SK-N-SH (cell line): ENCODE measurements at regions of chr2 and their contacts with region 1.

Region 1: DNA sequence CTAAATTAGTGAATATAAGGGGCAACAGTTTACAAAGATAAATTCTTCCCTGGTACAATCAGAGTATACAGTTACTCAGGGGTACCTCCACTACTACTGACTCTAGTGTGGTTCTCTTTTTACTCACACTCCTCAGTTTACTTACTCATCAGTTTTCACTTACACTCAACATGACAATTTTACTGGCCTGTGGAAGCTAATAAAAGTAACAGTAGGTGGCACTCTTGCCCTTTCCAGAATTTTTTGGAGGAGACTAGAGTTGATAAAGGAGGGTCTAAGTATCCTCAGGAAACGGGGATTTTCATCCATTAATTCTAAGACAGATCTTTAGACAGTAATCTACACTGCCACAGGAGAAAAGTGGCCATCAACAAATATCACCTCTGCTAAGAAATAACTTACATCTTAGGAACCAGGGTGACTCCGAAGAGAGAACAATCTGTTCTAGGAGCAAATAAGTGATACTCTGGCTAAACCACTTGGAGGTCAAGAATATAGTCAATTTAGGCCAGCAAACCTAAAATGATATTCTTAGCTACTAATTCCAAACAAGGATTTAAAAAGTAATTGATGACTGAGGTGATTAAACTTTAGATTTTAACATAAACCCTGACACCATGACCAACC is 61.3 kb downstream of the ATL2 start:
- DNase-seq: peak; percentile 67
- H3K4me3 ChIP-seq: no peak overlapping the region; a peak in 1 of 4 replicates
- H3K27ac ChIP-seq: no peak overlapping the region
- H3K4me1 ChIP-seq: no peaks in the 10 kb centered on the region; a peak in 1 of 4 replicates
- H3K27me3 ChIP-seq: no peaks in the 10 kb centered on the region
- CTCF ChIP-seq: peak; percentile 97
- EP300 ChIP-seq: no peak
- RAD21 ChIP-seq: peak; percentile 92

Region 2: DNA sequence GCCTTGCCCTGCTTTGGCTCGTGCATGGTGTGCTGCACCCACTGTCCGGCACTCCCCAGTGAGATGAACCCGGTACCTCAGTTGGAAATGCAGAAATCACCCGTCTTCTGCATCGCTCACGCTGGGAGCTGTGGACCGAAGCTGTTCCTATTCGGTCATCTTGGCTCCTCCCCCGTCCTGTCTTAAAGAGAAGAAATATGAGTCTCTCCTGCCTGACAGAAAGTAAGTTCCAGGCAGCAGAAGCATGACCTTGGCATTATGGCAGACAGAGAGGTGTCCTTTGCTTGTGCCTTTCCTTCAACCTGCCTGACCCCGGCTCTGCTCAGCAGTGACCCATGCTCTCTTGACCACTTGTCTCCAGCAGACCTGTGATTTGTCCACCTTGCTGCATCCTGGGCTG is 177.4 kb before region 1 on chr2:
- CTCF ChIA-PET with region 1: no interaction called
- POLR2A ChIA-PET with region 1: no interaction called
- DNase-seq: no peak
- H3K4me3 ChIP-seq: no peak overlapping the region
- H3K27ac ChIP-seq: no peak overlapping the region
- H3K4me1 ChIP-seq: no peaks in the 10 kb centered on the region
- H3K27me3 ChIP-seq: no peaks in the 10 kb centered on the region
- CTCF ChIP-seq: no peak
- EP300 ChIP-seq: no peak
- RAD21 ChIP-seq: no peak

Region 3: GRCh38 chr2:38245114-38245641 is 70.6 kb before region 1 on chr2:
- CTCF ChIA-PET with region 1: no interaction called
- POLR2A ChIA-PET with region 1: no interaction called
- DNase-seq: no peak
- H3K4me3 ChIP-seq: no peak overlapping the region
- H3K27ac ChIP-seq: peak overlapping the region in 1 of 2 experiments; percentile 56; a peak in 1 of 4 replicates
- H3K4me1 ChIP-seq: peaks cover 0 to 17% of the 10 kb centered on the region in 2 experiments; a peak in 2 of 4 replicates
- H3K27me3 ChIP-seq: no peaks in the 10 kb centered on the region
- CTCF ChIP-seq: no peak
- EP300 ChIP-seq: no peak
- RAD21 ChIP-seq: no peak

Region 4: DNA sequence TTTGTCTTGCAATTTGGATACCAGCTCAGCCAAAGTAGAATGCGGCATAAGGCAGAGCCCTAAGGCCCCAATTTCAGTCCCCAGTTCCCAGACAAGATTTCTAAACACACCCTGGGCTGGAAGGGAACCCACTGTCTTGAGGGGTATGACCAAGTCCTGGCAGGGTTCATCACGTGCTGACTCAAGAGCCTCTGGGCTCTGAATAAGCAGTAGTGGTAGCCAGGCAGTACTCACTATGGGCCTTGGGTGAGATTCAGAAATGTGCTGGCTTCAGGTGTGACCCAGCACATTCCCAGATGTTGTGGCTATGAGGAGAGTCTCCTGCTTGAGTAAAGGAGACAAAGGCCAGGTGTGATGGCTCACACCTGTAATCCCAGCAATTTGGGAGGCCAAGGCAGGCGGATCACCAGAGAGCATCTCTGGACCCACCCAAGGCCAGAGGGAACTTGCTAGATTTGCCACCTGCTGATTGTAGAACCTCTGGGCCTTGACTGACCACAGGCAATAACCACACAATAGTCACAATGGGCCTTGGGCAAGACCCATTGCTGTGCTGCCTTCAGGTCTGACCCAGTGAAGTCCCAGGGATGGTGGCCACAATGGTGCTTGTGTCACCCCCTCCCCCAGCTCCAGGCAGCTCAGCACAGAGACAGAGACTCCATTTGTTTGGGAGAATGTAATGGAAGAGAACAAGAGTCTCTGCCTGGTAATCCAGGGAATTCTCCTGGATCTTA is 13.7 kb before region 1 on chr2:
- CTCF ChIA-PET with region 1: interaction called, 10 read pairs
- POLR2A ChIA-PET with region 1: interaction called, 5 read pairs
- DNase-seq: no peak
- H3K4me3 ChIP-seq: no peak overlapping the region
- H3K27ac ChIP-seq: no peak overlapping the region; a peak in 1 of 4 replicates
- H3K4me1 ChIP-seq: peaks cover 0 to 7% of the 10 kb centered on the region in 2 experiments; a peak in 2 of 4 replicates
- H3K27me3 ChIP-seq: no peaks in the 10 kb centered on the region
- CTCF ChIP-seq: no peak
- EP300 ChIP-seq: no peak
- RAD21 ChIP-seq: no peak

Region 5: DNA sequence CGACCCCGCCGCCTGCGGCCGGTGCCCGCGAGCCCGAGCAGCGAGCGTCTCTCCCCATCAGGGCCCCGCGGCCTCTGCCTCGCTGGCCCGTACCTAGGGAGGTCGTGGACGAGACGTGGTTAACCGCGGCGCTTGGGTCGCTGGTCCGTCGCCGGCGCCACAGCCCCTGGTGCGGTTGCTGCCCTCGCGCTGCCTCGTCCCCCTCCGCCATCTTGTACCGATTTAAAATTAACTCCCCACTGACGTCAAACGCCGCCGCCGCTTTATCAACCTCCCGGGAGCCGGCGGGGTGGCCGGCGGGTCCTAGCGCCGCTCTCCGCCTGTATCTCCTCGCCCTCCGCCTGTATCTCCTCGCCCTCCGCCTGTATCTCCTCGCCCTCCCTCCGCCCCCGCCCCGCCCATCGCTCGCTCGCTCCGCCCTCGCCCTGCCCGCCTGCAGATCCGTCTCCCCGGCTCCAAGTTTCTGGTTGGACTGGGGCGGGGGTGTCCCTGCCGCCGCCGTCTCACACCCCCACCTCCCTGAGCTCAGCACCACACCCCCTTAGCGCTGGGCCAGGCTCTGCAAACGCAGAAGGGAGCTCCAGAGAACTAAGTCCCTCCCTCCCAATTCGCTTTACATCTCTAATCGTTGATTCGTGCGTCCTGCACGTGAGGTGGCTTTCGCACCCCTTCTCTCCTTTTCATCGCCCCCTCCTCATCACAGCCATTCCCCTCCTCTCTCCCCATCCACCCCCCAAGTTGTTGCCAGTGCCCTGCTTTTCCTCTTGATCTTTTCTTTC is 61.4 kb after region 1 on chr2 and contains the start of gene ATL2:
- CTCF ChIA-PET with region 1: interaction called, 55 read pairs
- POLR2A ChIA-PET with region 1: no interaction called
- DNase-seq: peak; percentile 99
- H3K4me3 ChIP-seq: peak within 1 kb of the TSS; percentile 91 to 94
- H3K27ac ChIP-seq: peak within 1 kb of the TSS; percentile 81 to 94
- H3K4me1 ChIP-seq: peaks cover 14 to 16% of the 10 kb centered on the region in 2 experiments; a peak in 3 of 4 replicates
- H3K27me3 ChIP-seq: no peaks in the 10 kb centered on the region
- CTCF ChIP-seq: no peak
- EP300 ChIP-seq: peak in 1 of 2 experiments; percentile 50; a peak in 2 of 4 replicates
- RAD21 ChIP-seq: no peak
- polyA plus RNA-seq, gene ATL2: 30.5 and 55.8 TPM in 2 replicates

Region 6: DNA sequence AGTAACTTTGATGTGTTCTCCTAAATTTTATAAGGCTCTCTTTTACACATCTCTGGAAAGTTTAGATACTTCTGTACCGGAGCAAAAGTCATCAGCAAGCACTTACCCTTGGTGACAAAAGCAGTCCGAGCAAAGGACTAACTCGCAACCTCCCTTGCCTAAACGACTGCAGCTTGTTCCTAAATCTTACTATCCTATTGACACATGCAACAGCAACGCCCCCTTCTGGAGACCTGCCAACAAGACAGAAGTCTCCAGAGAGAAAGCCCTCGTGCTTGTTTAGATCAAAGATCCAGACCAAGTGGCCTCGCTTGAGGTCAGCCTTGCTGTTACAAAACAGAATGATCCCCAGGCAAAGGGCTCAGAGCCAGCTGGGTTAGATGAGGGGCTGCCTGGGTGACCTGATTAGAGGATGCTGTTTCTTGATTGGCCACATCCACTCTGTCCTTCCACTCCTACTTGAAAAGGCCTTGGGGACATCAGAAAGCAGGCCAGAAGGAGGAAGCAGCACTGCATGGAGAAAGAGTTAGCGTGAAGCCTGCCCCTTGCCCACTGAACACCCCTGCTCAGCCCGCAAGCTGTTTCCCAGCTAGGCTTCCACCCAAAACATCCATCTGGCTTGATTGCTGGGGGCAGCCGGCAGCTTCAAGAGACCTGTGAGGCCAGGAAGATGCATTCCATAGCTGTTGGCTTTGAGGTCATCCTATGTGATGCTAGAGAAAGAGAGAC is 192.7 kb after region 1 on chr2:
- CTCF ChIA-PET with region 1: interaction called, 206 read pairs
- POLR2A ChIA-PET with region 1: no interaction called
- DNase-seq: peak; percentile 74
- H3K4me3 ChIP-seq: no peak overlapping the region; a peak in 1 of 4 replicates
- H3K27ac ChIP-seq: peak overlapping the region; percentile 58 to 66
- H3K4me1 ChIP-seq: peaks cover 17 to 18% of the 10 kb centered on the region in 2 experiments; a peak in 3 of 4 replicates
- H3K27me3 ChIP-seq: no peaks in the 10 kb centered on the region
- CTCF ChIP-seq: peak; percentile 67
- EP300 ChIP-seq: 0 out of 4 replicates have a peak, but pooled peaks of 1 of the 2 experiments have one; percentile 9
- RAD21 ChIP-seq: peak; percentile 92

Region 7: DNA sequence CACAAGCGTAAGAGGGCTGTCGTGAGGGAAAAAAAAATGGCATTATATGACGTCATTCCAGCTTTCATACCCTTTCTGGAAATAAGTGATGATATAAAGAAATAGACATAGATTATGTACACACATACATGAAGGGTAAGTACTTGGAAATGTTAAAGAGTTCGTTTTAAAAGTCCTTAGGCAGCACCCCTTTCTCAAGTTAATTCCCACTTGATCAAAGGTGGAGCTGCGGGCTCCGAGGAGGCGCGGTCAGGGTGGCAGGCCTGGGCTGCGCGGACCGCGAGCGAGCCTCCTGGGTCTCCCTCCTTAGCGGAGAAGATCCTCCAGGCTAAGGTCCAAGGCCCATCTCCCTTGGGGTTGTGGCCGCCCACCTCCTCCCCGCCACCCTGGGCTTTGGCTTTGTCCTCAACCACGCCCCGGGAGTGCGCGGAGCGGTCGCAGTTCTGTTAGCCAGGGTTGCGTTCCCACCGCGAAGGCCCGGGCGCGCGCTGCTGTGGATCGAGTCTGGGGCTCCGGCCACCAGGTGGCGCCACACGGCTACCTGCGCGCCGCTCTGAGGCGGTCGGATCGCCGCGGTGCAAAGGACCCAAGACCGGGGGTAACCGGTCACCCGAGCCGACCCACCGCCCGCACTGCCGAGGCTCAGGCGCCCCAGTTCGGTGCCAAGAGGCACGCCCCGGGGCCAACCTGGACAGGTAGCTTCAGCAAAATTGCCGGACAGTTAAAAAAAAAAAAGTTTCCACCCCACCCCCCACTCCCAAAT is 220.1 kb after region 1 on chr2:
- CTCF ChIA-PET with region 1: interaction called, 21 read pairs
- POLR2A ChIA-PET with region 1: no interaction called
- DNase-seq: peak; percentile 97
- H3K4me3 ChIP-seq: peak overlapping the region; percentile 57 to 89
- H3K27ac ChIP-seq: no peak overlapping the region
- H3K4me1 ChIP-seq: peaks cover 0 to 3% of the 10 kb centered on the region in 2 experiments; a peak in 1 of 4 replicates
- H3K27me3 ChIP-seq: no peaks in the 10 kb centered on the region
- CTCF ChIP-seq: peak; percentile 93
- EP300 ChIP-seq: no peak
- RAD21 ChIP-seq: peak; percentile 84

Region 8: DNA sequence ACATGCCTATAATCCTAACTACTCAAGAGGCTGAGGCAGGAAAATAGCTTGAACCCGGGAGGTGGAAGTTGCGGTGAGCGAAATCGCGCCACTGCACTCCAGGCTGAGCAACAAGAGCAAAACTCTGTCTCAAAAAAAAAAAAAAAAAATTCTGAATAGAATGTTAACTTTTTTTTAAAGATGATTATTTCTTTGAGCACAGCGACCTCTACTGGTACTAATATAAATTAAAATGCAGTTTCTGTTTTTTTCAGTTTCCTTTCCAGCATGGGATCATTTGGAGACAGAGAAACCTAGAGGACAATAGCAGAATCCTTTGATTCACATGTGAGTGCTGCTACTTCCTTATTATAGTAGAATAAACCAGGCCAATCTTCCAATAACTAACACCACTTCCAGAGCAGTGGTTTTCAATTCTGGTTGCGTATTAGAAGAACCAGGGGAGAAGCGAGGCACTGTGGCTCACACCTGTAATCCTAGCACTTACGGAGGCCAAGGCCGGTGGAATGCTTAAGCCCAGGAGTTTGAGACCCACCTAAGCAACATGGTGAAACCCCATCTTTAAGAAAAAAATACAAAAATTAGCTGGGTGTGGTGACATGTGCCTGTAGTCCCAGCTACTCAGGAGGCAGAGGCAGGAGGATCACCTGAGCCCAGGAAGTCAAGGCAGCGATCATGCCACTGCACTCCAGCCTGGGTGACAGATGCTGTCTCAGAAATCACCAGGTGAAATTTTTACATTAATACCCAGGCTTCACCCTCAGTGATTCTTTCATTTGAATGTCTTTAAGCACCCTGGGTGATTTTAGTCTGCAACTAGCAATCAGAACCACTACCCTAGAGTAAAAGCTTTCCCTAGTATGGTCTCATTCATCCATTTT is 425.3 kb after region 1 on chr2:
- CTCF ChIA-PET with region 1: interaction called, 10 read pairs
- POLR2A ChIA-PET with region 1: no interaction called
- DNase-seq: peak; percentile 50
- H3K4me3 ChIP-seq: no peak overlapping the region
- H3K27ac ChIP-seq: peak overlapping the region in 1 of 2 experiments; percentile 23; a peak in 2 of 4 replicates
- H3K4me1 ChIP-seq: peaks cover 2 to 19% of the 10 kb centered on the region in 2 experiments
- H3K27me3 ChIP-seq: no peaks in the 10 kb centered on the region
- CTCF ChIP-seq: peak; percentile 75
- EP300 ChIP-seq: no peak
- RAD21 ChIP-seq: peak; percentile 56